ENCODE measurements at regions of chr11 and their contacts with region 1.

Region 1: DNA sequence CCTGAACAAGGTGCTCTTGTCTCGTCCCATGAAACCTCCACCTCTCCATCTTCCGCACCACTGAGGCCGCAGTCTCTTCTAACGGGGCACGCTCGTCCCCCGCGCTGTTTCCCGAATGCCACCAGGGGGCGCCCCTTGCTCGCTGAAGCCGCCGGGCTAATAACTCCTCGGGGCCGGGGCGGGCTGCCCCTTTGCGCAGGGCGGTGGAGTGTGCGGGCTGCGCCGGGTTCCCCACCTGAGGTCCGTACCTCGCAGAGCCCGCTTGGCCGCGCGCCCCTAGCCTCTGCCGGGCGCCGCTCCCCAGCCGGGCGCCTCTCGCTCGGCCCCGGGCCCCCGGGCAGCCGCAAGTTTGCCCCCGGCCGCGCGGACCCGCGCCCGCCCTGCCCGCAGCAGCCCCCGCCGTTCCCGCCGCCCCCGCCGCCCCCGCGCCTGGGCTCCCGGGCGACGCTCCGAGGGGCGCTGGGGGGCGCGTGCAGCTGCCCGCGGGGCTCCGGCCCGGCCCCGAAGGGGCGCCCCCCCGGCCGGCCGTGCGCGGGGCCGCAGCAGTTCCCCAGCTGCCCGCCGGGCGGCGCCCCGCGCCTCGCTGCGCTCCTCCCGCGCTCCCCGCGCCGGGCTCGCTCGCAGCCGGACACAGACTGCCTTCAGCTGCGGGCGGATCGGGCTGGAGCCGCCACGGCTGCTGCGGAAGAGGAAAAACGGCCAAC is at the start of gene GRIK4:
- DNase-seq: peak; percentile 14 to 44 (median 16)
- H3K4me3 ChIP-seq: no peak within 1 kb of the TSS
- H3K4me3 Mint-ChIP-seq: peak within 1 kb of the TSS in 1 of 2 donors; percentile 56
- H3K27ac ChIP-seq: no peak within 1 kb of the TSS
- H3K27ac Mint-ChIP-seq: peak within 1 kb of the TSS in 1 of 7 donors; percentile 66
- H3K4me1 ChIP-seq: no peaks in the 10 kb centered on the region
- H3K4me1 Mint-ChIP-seq: peaks cover 2% of the 10 kb centered on the region
- H3K27me3 ChIP-seq: peaks cover 6 to 57% of the 10 kb centered on the region in 2 donors
- H3K27me3 Mint-ChIP-seq: peaks cover 59 to 76% (median 66%) of the 10 kb centered on the region in 3 donors
- CTCF ChIP-seq: peak; percentile 85
- polyA plus RNA-seq, gene GRIK4: not detected

Region 2: DNA sequence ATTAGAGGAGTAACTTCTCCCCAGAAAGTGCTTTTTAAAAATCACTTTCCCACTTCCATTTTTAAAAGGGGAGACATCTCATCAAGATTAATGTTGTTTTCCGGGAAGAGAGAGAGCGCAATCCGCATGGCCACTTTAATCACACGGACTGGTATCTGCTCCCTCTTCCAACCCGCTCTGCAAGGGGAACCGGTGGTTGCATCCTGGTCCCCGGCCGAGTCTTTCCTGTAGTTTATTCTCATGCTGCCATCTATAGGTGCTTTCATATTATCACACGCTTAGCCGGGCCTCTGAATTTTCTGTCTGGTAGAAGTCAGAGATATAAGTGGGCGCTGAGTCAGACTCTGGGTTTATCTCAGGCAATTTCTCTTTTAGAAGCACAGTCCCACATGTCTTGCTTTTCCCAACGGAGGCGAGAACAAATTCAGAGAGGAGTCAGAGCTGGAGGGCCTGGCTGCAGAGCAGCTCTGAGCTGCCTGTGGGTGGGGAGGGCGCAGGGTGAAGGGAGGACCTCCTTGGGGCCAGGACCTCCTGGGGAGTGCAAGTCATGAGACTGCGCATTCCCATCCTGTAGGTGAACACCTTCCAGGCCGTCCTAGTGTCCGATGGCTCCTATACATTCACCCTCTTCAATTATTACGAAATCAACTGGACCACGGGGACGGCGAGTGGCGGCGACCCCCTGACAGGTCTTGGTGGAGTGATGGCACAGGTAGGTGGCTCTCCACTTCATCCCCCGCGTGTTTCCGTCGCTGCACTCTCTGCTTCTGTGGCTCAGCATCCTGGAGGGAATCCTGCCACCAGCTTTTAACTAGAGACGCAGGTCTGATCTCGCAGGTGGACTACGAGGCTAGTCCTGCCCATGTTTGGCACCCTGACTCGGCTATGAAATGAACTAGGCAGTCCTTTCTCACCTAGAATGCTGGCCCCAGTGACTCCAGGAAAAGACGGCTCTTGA is 601.5 kb after region 1 on chr11:
- intact Hi-C with region 1: loop called in 1 of 2 experiments (anchors 10 kb)
- DNase-seq: peak; percentile 8 to 35 (median 31)
- H3K4me3 ChIP-seq: no peak overlapping the region
- H3K4me3 Mint-ChIP-seq: peak overlapping the region in 1 of 2 donors; percentile 23
- H3K27ac ChIP-seq: no peak overlapping the region
- H3K27ac Mint-ChIP-seq: no peak overlapping the region
- H3K4me1 ChIP-seq: no peaks in the 10 kb centered on the region
- H3K4me1 Mint-ChIP-seq: no peaks in the 10 kb centered on the region
- H3K27me3 ChIP-seq: peaks cover 5 to 13% of the 10 kb centered on the region in 2 donors
- H3K27me3 Mint-ChIP-seq: peaks cover 12 to 28% (median 20%) of the 10 kb centered on the region in 3 donors
- CTCF ChIP-seq: peak; percentile 67

Region 3: GRCh38 chr11:121194731-121195596 is 683.7 kb after region 1 on chr11:
- intact Hi-C with region 1: loop called (anchors 5 to 10 kb)
- DNase-seq: peak; percentile 23 to 47 (median 41)
- H3K4me3 ChIP-seq: no peak overlapping the region
- H3K4me3 Mint-ChIP-seq: no peak overlapping the region
- H3K27ac ChIP-seq: no peak overlapping the region
- H3K27ac Mint-ChIP-seq: no peak overlapping the region
- H3K4me1 ChIP-seq: no peaks in the 10 kb centered on the region
- H3K4me1 Mint-ChIP-seq: no peaks in the 10 kb centered on the region
- H3K27me3 ChIP-seq: peaks cover 7 to 15% of the 10 kb centered on the region in 2 donors
- H3K27me3 Mint-ChIP-seq: peaks cover 6 to 21% (median 12%) of the 10 kb centered on the region in 3 donors
- CTCF ChIP-seq: peak; percentile 93

Measured in CD14-positive monocyte (primary cell).